ENCODE measurements at regions of chr12 and their contacts with region 1.

Region 1: DNA sequence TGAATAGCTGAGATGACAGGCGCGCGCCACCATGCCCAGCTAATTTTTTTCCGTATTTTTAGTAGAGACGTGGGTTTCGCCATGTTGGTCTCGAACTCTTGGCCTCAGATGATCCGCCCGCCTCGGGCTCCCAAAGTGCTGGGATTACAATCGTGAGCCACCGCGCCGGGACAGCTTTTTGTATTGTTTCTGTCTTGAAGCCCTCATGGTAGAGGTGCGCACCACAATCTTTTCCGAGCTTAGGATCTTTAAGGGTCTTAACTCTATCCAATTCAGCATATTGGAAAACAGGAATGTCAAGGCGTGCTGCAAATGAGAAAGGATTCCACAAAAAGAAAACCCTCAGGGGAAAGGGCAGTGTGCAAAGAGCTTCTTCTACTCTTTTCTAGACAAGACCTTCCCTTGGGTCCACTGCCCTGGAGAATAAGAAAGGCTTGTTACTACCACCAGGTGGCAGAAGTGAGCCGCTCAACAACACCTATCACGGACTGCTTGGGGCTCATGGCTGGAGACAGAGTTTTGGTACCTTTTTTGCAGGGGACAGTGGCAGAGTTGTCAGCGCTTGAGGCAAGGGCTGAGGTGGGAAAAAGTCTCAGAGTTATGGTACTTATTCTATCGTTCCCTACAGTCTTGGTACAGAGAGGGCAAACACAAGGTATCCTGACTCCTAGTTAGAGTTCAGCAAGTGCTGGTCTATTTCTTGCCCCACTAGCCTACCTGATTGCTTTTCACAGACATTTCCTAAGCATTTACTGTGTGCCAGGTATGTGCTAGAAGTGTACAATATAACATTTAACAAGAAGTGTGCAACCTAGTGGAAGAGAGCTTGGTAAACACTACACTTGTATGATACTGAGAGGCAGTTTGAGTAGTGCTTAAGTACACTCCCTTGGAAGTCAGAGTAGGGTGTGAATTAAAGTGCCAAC is 16.4 kb upstream of the SP7 start:
- DNase-seq: peak; percentile 79 to 87
- H3K4me3 ChIP-seq: no peak overlapping the region
- H3K27ac ChIP-seq: no peak overlapping the region
- H3K4me1 ChIP-seq: no peaks in the 10 kb centered on the region
- H3K27me3 ChIP-seq: no peaks in the 10 kb centered on the region
- CTCF ChIP-seq: peak; percentile 81 to 92

Region 2: DNA sequence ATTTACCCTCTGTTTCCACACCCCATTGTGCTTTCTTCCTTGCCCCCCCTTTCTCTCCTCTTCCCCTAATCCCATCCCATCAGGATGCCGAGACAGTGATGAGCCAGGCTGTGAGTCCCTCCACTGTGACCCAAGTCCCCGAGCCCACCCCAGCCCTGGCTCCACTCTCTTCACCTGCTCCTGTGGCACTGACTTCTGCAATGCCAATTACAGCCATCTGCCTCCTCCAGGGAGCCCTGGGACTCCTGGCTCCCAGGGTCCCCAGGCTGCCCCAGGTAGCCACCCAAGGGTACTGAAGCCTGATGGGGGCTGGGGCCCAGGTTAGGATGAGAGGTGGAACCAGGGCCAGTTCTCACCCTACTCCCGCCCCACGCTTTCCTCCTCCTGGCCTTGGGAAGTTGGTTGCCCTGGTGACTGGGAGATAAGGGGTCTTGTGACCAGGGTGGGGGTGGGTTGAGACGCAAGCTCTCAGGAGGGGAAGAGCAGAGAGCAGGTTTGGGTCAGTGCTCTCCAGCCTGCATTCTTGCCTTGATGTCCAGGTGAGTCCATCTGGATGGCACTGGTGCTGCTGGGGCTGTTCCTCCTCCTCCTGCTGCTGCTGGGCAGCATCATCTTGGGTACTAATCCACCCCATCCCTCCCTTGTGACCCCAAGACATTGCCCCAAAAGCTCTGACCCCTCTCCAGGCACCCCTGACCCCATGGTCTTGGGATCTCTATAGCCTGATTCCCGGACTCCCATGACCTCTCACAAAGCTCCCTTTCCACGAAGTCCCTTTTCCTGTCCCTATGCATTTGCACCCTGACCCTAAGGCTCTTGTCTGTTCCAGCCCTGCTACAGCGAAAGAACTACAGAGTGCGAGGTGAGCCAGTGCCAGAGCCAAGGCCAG is 72.3 kb after region 1 on chr12:
- intact Hi-C with region 1: loop called (anchors 1 kb)
- DNase-seq: no peak
- H3K4me3 ChIP-seq: no peak overlapping the region
- H3K27ac ChIP-seq: no peak overlapping the region
- H3K4me1 ChIP-seq: peaks cover 0 to 7% (median 5%) of the 10 kb centered on the region in 4 donors
- H3K27me3 ChIP-seq: no peaks in the 10 kb centered on the region
- CTCF ChIP-seq: no peak

Region 3: GRCh38 chr12:53514628-53515290 is 162.2 kb after region 1 on chr12:
- intact Hi-C with region 1: loop called (anchors 5 kb)
- DNase-seq: no peak
- H3K4me3 ChIP-seq: no peak overlapping the region
- H3K27ac ChIP-seq: no peak overlapping the region
- H3K4me1 ChIP-seq: no peaks in the 10 kb centered on the region
- H3K27me3 ChIP-seq: no peaks in the 10 kb centered on the region
- CTCF ChIP-seq: no peak

Measured in tibial artery (tissue), 4 donors.